Posterior vena cava (tissue), 2 donors: ENCODE measurements at regions of chr3 and their contacts with region 1.

Region 1: GRCh38 chr3:76161856-76162255 is 376.5 kb upstream of the ZNF717 start:
- DNase-seq: no peak

Region 2: GRCh38 chr3:76131396-76132153 is 30.3 kb before region 1 on chr3:
- intact Hi-C with region 1: loop called in 1 of 2 experiments (anchors 1 kb)
- DNase-seq: no peak